Activated CD4-positive, alpha-beta T cell treated with anti-CD3 and anti-CD28 coated beads, Interleukin-2, amount 10 ng/mL, durations not matched to agents 24 days and 14 days (primary cell): ENCODE measurements at regions of chr22 and their contacts with region 1.

Region 1: DNA sequence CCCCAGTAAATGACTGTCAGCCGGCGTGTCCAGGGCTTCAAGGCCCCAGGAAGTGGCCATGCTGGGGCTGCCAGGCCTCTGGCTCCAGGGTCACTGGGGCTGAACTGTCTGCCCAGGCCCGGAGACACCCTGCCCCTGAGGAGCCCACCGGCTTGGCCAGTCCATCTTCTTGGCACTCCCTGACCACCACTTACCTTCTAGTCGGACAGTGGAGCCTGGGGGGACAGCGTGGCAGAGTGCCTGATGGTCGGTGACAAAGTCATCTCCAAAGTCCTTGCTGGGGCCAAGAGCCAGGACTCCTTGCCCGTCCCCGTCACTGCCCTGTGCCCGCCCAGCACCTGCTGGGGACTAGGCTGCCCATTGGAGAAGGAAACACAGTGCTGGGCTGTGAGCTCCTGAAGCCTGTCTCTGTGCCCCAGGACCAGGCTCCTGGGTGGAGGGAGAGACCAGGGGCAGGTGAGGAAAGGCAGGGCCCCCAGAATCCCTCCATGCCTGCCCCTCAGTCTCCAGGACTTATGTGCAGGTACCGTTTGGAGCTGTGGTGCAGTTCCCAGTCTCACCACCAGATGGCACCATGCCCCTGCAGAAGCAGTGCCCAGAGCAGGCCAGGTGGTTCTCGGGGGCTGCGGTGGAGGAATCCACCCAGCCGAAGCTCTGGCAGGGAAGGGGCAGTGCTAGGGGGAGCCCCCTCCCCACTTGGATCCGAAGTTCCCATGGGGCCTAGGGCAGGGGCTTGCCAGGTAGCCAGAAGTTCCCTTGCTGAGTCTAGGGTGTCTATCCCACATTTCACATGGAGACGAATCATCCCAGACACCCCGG is 6.0 kb upstream of the CCDC188 start:
- DNase-seq: peak; percentile 96
- H3K4me3 Mint-ChIP-seq: no peak overlapping the region
- H3K27ac Mint-ChIP-seq: no peak overlapping the region
- H3K4me1 Mint-ChIP-seq: peaks cover 2% of the 10 kb centered on the region
- H3K27me3 Mint-ChIP-seq: no peaks in the 10 kb centered on the region

Region 2: DNA sequence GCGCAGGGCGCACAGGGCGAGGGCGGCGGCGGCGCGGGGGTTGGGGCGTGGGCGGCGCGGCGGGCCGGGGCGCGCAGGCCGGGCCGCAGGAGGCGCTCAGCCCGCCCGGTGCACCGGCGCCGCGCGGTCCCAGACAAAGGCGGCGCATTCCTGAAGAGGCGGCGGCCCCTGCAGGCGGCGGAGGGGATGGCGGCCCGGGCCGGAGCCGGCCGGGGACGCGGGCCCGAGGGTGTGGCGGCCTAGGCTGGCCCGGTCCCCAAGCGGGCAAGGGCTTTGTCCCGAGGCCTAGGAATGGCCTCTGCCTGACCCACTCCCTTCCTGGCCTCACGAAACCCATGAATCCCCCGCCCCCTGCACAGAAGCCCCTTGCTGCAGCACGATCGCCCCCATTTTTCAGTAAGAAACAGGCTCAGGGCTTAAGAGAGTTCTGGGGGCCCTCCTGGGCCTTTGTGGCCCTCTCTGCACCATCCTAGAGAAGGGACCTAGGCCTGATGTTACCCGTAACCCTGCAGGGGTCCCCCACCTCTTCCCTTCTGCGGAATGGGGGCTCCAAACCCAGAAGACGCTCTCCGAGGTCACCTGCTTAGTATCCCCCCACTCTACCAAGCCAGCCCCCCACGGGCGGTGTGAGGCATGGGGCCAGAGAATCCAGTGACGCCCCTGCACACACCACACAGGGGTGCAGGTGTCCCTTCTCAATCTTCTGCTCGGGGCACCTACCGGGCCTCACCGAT is 111.6 kb after region 1 on chr22 and contains the start of gene RTN4R:
- intact Hi-C with region 1: loop called (anchors 5 kb)
- DNase-seq: peak; percentile 90
- H3K4me3 Mint-ChIP-seq: peak within 1 kb of the TSS; percentile 67
- H3K27ac Mint-ChIP-seq: no peak within 1 kb of the TSS
- H3K4me1 Mint-ChIP-seq: peaks cover 2% of the 10 kb centered on the region
- H3K27me3 Mint-ChIP-seq: peaks cover 3% of the 10 kb centered on the region
- total RNA-seq, gene RTN4R: 1.6 and 1.7 TPM in 2 replicates

Region 3: DNA sequence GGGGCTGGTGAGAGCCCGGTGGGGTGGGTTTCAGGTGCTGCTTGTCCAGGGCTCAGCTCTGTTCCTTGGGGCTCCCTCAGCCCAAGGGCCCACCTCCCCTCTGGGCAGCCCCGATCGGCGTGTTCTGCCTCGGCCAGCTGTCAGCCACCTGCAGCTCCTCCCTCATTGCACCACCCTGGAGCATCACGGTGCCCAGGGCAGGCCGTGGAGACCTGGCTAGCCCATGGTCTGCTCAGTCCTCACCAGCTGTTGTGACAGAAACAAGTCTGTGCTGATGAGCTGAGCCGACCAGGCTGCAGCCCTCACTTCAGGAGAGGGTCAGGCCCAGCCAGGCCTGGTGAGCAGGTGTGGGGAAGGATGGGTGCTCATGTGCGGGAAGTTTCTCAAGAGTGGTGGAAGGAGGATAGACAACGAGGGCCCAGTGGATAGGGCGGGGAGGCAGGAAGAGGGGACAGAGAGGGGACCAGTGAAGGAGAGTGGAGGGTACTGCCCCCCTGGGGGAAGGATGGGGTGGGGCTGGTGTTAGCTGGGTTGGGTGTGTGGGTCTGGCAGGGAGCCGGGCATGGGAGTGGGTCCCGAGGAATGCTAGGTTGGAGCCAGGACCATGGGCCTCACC is 127.8 kb after region 1 on chr22:
- intact Hi-C with region 1: loop called (anchors 1 kb)
- DNase-seq: no peak
- H3K4me3 Mint-ChIP-seq: no peak overlapping the region
- H3K27ac Mint-ChIP-seq: no peak overlapping the region
- H3K4me1 Mint-ChIP-seq: peaks cover 1% of the 10 kb centered on the region
- H3K27me3 Mint-ChIP-seq: no peaks in the 10 kb centered on the region

Region 4: DNA sequence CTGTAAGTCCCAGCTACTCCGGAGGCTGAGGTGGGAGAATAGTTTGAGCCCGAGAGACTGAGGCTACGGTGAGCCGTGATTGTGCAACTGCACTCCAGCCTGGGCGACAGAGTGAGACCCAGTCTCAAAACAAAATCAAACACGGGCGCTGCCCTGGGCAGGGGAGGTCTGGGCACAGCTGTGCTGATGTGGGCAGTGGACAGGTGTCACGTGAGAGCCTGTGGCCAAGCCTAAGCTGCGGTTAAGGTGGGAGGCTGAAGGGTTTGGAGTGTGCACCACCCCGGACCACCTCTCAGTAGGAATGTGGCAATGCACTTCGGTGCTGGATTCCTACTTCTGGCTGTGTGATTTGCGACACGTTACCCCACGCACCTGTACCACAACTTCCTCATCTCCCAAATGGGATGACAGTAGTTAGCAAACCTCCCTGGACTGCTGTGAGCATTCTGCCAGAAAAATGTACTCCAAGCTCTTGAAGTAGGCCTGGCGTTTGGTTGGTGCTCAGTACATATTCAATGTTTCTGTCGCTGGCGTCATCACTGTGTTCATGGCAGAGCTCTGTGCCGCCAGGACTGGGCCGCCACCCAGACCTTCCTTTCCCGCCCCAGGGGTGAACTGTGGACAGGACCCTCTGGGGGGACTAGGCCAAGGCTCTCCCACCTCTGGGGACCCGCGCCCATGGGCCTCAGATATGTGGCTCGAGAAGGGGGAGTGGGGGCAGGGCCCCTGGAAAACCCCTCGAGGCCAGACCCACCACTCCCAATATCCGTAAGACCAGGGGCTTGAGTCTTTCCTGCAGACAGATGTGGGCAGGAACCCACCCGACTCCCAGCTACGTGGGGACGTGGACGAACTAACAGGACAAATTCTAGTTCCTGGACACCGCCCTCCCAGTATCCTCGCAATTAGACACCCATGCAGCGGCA is 236.4 kb after region 1 on chr22:
- intact Hi-C with region 1: no loop called
- DNase-seq: no peak
- H3K4me3 Mint-ChIP-seq: peak overlapping the region; percentile 89
- H3K27ac Mint-ChIP-seq: peak overlapping the region; percentile 89
- H3K4me1 Mint-ChIP-seq: peaks cover 20% of the 10 kb centered on the region
- H3K27me3 Mint-ChIP-seq: peaks cover 2% of the 10 kb centered on the region

Region 5: DNA sequence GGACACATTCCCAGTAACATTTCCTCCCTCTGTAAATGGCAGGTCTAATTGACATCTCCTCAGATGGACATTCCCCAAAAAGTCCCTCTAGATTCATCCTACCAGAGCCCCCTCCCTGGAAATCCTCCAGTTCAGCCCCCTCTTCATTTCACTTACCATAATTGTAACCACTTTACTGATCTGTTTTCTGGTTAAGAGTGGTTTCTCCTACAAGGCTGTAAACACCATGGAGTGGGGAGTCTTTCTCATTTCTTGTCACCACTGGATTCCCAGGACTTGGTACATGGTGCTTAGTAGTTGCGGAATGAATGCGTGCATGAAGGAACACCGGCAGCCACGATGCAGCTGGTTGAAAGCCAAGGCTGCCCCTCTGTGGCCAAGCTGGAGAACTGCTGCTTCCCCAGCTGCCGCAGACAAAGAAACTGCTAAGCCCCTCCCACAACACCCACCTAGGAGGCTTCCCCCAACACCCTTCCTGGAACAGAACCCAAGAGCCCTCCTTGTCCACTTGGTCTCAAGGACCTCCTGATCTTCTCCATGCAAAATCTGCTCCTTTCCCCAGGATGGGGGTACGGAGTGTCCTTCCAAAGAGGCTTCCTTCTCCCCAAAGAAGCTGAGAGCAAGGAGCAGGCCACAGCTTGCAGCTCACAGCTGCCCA is 299.4 kb after region 1 on chr22:
- intact Hi-C with region 1: loop called (anchors 1 kb)
- DNase-seq: peak; percentile 92
- H3K4me3 Mint-ChIP-seq: no peak overlapping the region
- H3K27ac Mint-ChIP-seq: peak overlapping the region; percentile 68
- H3K4me1 Mint-ChIP-seq: peaks cover 15% of the 10 kb centered on the region
- H3K27me3 Mint-ChIP-seq: no peaks in the 10 kb centered on the region